Dorsolateral prefrontal cortex (tissue), 120 donors: ENCODE measurements at regions of chr3 and their contacts with region 1.

Region 1: GRCh38 chr3:58299839-58300516 is 6.1 kb upstream of the RPP14 start:
- DNase-seq: no peak
- H3K4me3 ChIP-seq: peak overlapping the region in 5 of 59 donors; percentile 3 to 21 (median 11)
- H3K27ac ChIP-seq: peak overlapping the region in 48 of 59 donors; percentile 7 to 99 (median 93)
- H3K27me3 ChIP-seq: no peaks in the 10 kb centered on the region
- CTCF ChIP-seq: peak; percentile 39 to 90 (median 73)

Region 2: DNA sequence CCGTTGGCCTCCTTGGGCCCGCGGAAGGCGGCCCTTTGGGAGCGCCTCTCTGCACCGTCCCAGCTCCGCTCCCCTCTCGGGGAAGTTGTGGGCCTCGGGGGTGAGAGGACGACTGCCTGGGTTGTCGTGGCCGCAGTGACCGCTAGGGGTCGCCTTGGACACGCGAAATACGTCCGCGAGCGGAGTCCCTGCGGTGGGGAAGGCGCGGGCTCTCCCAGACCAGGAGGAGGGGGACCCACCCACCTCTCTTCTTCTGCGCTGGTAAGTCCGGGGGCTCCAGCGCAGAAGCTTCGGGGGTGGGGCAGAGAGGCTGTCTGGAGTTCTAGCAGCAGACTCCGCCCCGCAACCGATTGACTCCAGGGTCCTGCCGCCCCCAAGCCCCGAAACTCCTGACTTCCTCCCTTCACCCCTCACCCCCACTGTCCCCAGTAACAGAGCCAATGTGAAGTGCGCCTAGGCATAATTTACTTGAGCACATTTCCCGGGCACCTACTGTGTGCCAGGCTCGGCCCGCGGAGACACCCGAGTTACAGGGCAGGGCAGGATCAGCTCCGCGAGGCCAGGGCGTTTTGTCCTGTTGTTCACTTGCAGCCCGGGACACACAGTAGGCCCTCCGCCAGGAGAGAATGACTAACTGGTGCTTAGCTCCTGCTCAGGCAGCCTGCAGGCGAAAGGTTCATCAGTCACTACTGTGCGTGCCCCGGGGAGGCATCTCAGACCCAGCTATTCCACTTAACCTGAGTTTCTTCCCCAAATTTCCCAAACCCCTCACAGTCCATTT is 122.0 kb before region 1 on chr3:
- intact Hi-C with region 1: loop called (anchors 1 to 2 kb)
- DNase-seq: peak; percentile 82 to 93 (median 89)
- H3K4me3 ChIP-seq: peak overlapping the region; percentile 34 to 75 (median 59)
- H3K27ac ChIP-seq: peak overlapping the region in 5 of 59 donors; percentile 25 to 75 (median 59)
- H3K27me3 ChIP-seq: no peaks in the 10 kb centered on the region
- CTCF ChIP-seq: peak; percentile 79 to 98 (median 94)

Region 3: GRCh38 chr3:58188173-58188564 is 111.8 kb before region 1 on chr3:
- intact Hi-C with region 1: loop called in 1 of 2 experiments (anchors 5 kb)
- DNase-seq: peak in 1 of 10 donors; percentile 26
- H3K4me3 ChIP-seq: no peak overlapping the region
- H3K27ac ChIP-seq: no peak overlapping the region
- H3K27me3 ChIP-seq: no peaks in the 10 kb centered on the region
- CTCF ChIP-seq: no peak

Region 4: GRCh38 chr3:58237238-58237940 is 62.6 kb before region 1 on chr3 and contains the start of gene ABHD6:
- intact Hi-C with region 1: loop called (anchors 1 to 2 kb)
- DNase-seq: peak; percentile 63 to 89 (median 71)
- H3K4me3 ChIP-seq: peak within 1 kb of the TSS; percentile 52 to 99 (median 93)
- H3K27ac ChIP-seq: peak within 1 kb of the TSS; percentile 80 to 97 (median 92)
- H3K27me3 ChIP-seq: no peaks in the 10 kb centered on the region
- CTCF ChIP-seq: peak; percentile 27 to 93 (median 74)
- total RNA-seq, gene ABHD6: 32.0 to 78.5 (median 50.8) TPM

Region 5: GRCh38 chr3:58321791-58322190 is 21.8 kb after region 1 on chr3:
- intact Hi-C with region 1: no loop called
- DNase-seq: no peak
- H3K4me3 ChIP-seq: no peak overlapping the region
- H3K27ac ChIP-seq: peak overlapping the region in 18 of 59 donors; percentile 3 to 56 (median 33)
- H3K27me3 ChIP-seq: no peaks in the 10 kb centered on the region
- CTCF ChIP-seq: no peak